ENCODE measurements at regions of chr20 and their contacts with region 1.

Region 1: GRCh38 chr20:22691369-22692118 is 107.2 kb upstream of the FOXA2 start:
- DNase-seq: peak; percentile 85 to 89
- ATAC-seq: peak; percentile 93 to 97
- H3K4me3 ChIP-seq: no peak overlapping the region; the same call in 2 of the 3 replicates
- H3K27ac ChIP-seq: peak overlapping the region; percentile 83 to 90
- H3K4me1 ChIP-seq: peaks cover 23% of the 10 kb centered on the region
- CTCF ChIP-seq: peak; percentile 97
- EP300 ChIP-seq: no peak
- POLR2A ChIP-seq: no peak
- RAD21 ChIP-seq: peak; percentile 99 to 100

Region 2: GRCh38 chr20:22729180-22729579 is 37.6 kb after region 1 on chr20:
- CTCF ChIA-PET with region 1: interaction called, 355 read pairs
- POLR2A ChIA-PET with region 1: no interaction called
- DNase-seq: peak in 1 of 2 experiments; percentile 36
- ATAC-seq: peak; percentile 55 to 57; a peak in 5 of 6 replicates
- H3K4me3 ChIP-seq: no peak overlapping the region
- H3K27ac ChIP-seq: peak overlapping the region; percentile 34 to 70; a peak in 5 of 6 replicates
- H3K4me1 ChIP-seq: peaks cover 30% of the 10 kb centered on the region
- CTCF ChIP-seq: no peak
- EP300 ChIP-seq: no peak
- POLR2A ChIP-seq: no peak
- RAD21 ChIP-seq: no peak

Region 3: DNA sequence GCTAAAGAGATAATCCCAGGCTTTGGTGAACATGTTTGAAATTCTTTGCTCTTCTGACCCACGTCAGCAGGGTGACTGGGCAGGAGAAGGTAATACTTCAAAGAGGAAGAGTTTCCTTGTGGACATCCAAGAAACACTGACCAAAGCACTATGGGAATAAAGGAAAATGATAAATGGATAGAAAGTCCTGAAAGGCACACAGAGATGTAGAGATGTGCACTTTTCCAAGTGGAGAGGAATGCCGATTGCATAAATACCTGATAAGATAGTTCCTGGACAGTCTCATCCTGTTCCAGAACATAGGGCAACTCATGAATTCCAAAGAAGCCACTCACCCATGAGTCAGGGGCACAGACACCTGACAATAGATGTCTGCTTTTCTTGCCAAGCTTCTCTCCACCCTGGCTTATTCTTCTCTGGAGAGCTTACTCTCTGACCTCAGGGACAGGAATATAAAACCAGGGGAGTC is 84.2 kb after region 1 on chr20:
- CTCF ChIA-PET with region 1: interaction called, 78 read pairs
- POLR2A ChIA-PET with region 1: interaction called, 15 read pairs
- DNase-seq: peak; percentile 86 to 97
- ATAC-seq: peak; percentile 94 to 95
- H3K4me3 ChIP-seq: no peak overlapping the region
- H3K27ac ChIP-seq: peak overlapping the region; percentile 92 to 98
- H3K4me1 ChIP-seq: peaks cover 70% of the 10 kb centered on the region
- CTCF ChIP-seq: no peak
- EP300 ChIP-seq: peak; percentile 99
- POLR2A ChIP-seq: no peak
- RAD21 ChIP-seq: peak; percentile 49 to 85

Region 4: DNA sequence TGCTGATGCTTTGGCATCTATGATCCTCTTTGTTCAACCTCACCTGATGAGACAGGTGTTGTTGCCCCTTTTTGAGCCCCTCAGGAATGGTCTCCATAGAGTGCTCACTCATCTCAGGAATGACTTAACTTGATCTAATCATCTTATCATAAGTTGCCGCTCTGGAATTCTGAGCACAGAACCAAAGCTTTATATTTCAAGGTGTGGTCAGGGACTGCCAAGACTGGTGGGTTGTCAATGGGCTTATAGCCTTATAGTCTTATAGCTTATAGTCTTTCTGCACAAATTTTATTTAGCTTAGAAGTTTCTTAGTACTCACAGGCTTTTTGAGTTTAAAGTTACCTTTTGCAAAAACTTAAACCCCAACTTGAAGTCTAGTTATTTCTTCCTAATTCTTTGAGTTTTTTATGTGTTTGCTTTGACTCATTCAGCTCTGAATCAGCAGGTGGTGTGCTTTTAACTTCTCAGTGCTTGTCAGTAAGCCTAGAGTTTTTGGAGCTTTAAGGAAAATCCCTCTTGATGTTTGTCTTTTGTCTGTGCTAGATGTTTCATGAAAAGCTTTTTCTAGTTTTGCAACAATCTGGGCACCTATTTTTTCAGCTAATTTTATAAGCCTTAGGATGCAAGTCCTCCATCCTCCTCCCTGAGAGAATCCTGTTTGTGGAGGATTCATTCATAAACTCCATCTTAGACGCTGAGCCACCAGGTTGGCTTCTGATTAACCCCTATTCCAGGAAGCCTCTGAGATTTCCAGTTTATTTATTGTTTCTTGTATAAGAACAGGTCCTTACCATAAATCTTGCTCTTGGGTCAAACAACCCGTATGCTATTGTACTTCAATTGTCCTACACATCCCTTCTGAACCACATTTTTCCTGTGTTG is 271.3 kb after region 1 on chr20:
- CTCF ChIA-PET with region 1: interaction called, 39 read pairs
- POLR2A ChIA-PET with region 1: interaction called, 4 read pairs
- DNase-seq: peak; percentile 67 to 78
- ATAC-seq: peak; percentile 85 to 86
- H3K4me3 ChIP-seq: no peak overlapping the region
- H3K27ac ChIP-seq: peak overlapping the region; percentile 83 to 87
- H3K4me1 ChIP-seq: peaks cover 23% of the 10 kb centered on the region
- CTCF ChIP-seq: no peak
- EP300 ChIP-seq: peak; percentile 53 to 58; a peak in 2 of 5 replicates
- POLR2A ChIP-seq: no peak
- RAD21 ChIP-seq: peak; percentile 16 to 65; a peak in 4 of 5 replicates

Region 5: GRCh38 chr20:23043376-23043775 is 351.8 kb after region 1 on chr20:
- CTCF ChIA-PET with region 1: interaction called, 190 read pairs
- POLR2A ChIA-PET with region 1: interaction called, 31 read pairs
- DNase-seq: no peak
- ATAC-seq: no peak
- H3K4me3 ChIP-seq: no peak overlapping the region
- H3K27ac ChIP-seq: peak overlapping the region in 1 of 2 experiments; percentile 14; a peak in 1 of 6 replicates
- H3K4me1 ChIP-seq: peaks cover 48% of the 10 kb centered on the region
- CTCF ChIP-seq: no peak
- EP300 ChIP-seq: no peak
- POLR2A ChIP-seq: no peak
- RAD21 ChIP-seq: no peak

Region 6: GRCh38 chr20:23245553-23246181 is 554.1 kb after region 1 on chr20:
- CTCF ChIA-PET with region 1: interaction called, 14 read pairs
- POLR2A ChIA-PET with region 1: no interaction called
- DNase-seq: peak; percentile 65 to 75
- ATAC-seq: peak; percentile 93 to 98
- H3K4me3 ChIP-seq: no peak overlapping the region
- H3K27ac ChIP-seq: peak overlapping the region in 1 of 2 experiments; percentile 34; a peak in 1 of 6 replicates
- H3K4me1 ChIP-seq: no peaks in the 10 kb centered on the region
- CTCF ChIP-seq: peak; percentile 71
- EP300 ChIP-seq: no peak
- POLR2A ChIP-seq: no peak
- RAD21 ChIP-seq: peak; percentile 63 to 64

Region 7: DNA sequence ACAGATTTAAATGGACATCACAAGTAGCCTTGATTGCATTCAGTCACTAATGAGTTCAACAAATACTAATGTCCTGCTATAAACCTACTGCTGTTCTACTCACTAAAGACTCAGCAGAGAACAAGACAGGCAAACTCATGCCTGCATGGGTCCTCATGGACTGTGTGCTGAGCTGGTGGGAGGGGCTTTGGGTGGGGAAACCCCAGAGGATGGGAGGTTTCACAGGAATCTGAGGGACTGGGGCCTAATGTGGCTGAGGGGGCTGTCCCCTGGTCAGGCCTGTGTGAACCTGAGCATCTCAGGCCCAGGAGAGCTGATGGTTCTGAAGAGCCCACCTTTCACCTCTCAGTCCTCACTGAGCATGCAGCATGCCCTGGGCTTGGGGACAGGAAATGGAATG is 800.7 kb after region 1 on chr20:
- CTCF ChIA-PET with region 1: no interaction called
- POLR2A ChIA-PET with region 1: no interaction called
- DNase-seq: no peak
- ATAC-seq: peak in 1 of 2 experiments; percentile 30; a peak in 2 of 6 replicates
- H3K4me3 ChIP-seq: no peak overlapping the region
- H3K27ac ChIP-seq: no peak overlapping the region
- H3K4me1 ChIP-seq: no peaks in the 10 kb centered on the region
- CTCF ChIP-seq: no peak
- EP300 ChIP-seq: no peak
- POLR2A ChIP-seq: no peak
- RAD21 ChIP-seq: no peak

Measured in A549 (cell line).